GM10248 (cell line): ENCODE measurements at regions of chr14 and their contacts with region 1.

Region 1: DNA sequence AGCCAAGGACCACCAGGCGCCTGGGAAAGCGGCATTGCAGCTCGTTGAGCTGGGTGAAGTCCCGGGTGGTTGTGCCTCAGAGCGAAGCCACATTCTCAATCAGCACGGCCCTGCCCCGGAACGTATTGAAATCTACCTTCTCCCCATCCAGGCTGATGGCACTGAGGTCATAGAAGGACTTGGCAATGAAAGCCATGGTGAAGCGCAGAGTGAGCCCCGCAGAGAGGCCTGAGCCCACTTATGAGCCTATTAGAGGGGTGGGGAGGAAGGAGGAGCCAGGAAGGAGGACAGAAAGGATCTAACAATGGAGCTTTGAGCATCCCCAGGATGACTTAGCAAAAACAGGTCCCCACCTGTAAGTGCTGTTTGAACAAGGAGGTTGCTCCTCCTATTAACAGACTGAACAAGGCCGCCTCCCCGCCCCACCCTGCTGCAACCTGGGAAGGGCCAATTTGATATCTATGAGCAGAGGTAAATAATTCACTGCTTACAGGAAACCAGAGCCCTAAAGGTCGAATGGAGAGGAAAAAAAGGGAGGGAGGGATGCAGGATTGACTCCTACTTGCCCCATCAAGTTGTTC is at the start of gene GPX2:
- DNase-seq: no peak
- CTCF ChIP-seq: no peak

Region 2: DNA sequence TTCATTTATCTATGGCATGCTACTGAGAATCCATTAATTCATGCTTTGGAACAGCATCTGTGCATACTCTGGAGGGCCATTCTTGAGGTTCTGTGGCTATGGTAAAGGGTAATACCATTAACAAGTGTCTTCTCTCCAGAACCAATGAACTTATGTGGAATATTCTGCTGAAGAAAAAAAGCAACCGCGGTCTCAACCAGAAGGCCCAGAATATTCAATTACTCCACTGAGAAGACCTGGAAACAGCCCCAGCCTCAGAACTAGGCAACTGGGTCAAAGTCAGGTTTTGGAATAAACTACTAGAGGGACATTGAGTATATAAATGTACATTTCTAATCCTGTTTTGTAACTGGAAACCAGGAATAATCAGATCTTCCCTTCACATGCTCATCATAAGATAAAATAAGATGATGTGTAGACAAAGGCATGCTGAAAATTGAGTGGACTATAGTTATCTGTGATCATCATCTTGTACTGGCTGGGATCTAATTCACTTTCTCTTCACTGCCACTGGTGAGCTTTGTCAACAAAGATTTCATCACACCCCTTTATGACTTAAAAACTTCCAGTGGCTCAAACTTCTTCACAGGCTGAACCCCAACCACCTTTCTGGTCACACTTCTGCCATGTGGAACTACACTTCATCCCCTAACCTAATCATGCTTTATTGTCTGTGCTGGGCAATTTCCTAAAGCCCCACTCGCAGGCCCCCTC is 69.0 kb before region 1 on chr14:
- CTCF ChIA-PET with region 1: no interaction called
- POLR2A ChIA-PET with region 1: no interaction called
- DNase-seq: no peak
- CTCF ChIP-seq: no peak

Region 3: GRCh38 chr14:64952598-64953309 is 10.1 kb after region 1 on chr14:
- CTCF ChIA-PET with region 1: interaction called, 14 read pairs
- POLR2A ChIA-PET with region 1: no interaction called
- DNase-seq: peak; percentile 70
- CTCF ChIP-seq: peak; percentile 17

Region 4: GRCh38 chr14:64986578-64987571 is 44.3 kb after region 1 on chr14 and contains the start of gene FNTB:
- CTCF ChIA-PET with region 1: no interaction called
- POLR2A ChIA-PET with region 1: no interaction called
- DNase-seq: peak; percentile 94
- CTCF ChIP-seq: peak; percentile 98